Psoas muscle (tissue), 8 donors: ENCODE measurements at regions of chr2 and their contacts with region 1.

Region 1: DNA sequence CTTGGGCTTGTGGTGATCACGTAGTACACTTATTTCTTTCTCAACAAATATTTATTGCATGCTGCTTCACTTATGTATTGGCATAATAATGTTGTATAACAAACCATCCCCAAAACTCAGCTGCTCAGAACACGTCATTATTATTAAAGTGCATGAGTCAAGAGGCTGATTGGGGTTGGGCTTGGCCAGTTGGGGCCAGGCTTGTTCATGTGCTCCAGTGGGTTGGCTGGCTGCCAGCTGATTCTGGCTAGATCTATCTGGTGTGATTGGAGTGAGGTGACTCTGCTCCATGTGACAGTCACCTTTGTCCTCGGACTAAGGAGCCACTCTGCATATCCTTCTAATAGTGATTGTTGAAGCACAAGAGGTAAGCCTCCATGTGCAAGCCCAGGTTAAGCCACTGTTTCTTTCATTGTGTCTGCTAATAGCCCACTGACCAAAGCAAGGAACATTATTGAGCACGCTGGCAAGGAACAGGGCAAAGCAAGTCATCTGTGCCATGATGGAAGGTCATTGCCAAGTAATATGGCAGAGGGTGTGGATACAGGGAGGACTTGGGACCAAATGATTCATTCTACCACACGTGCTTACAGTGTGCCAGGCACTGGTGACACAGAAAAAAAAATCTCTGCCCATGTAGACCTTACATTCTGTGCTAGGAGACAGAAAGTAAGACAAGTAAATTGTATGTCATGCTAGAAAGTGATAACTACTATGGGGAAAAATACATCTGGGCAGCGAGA is 63.3 kb upstream of the TMEM182 start:
- DNase-seq: peak in 1 of 2 donors; percentile 18
- ATAC-seq: peak in 3 of 4 donors; percentile 27 to 37 (median 30)
- H3K4me3 ChIP-seq: no peak overlapping the region
- H3K27ac ChIP-seq: no peak overlapping the region
- H3K4me1 ChIP-seq: no peaks in the 10 kb centered on the region
- H3K27me3 ChIP-seq: no peaks in the 10 kb centered on the region
- CTCF ChIP-seq: no peak

Region 2: DNA sequence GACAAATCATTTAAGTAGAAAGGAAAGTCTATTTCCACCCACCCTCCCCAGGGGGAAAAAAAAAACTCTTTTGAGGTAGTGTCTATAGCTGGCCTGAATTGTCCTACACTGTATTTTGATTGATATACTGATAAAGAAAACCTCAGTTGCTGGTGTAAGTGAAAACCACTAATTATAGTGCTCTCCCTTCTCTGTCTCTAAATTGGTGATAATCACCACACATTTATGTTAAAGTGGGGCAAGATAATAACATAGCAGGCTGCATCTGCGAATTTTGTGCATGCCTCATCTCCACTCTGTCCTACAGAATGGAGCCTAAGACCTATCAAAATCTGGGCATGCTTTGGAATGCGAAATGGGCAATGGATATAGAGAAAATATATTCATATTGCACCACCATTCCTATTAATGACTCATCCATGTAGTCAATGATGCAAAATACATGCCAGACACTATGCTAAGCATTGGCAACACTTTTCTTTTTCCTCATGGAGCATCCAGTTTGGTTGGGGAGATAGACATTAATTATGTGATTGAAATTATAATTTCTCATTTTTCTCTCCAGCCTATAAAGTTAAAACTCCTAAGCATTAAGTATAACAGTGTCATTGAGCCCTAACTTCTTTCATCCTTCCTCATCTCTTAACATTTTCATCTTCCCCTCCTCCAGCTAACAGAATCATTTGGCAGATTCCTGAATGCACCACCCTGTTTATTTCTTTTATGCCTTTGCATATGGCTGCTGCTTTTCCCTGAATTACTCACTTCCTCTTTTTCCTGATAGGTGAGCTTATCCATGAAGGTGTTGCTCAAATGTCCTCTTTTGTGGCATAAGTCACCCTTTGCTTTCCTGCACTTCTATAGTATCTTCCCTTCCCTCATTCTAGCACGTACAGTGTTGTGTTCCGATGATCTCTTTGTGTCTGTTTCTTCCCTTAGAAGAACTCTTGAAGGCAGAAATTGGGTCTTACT is 21.0 kb before region 1 on chr2:
- intact Hi-C with region 1: loop called in 1 of 2 experiments (anchors 2 kb)
- DNase-seq: no peak
- ATAC-seq: no peak
- H3K4me3 ChIP-seq: no peak overlapping the region
- H3K27ac ChIP-seq: no peak overlapping the region
- H3K4me1 ChIP-seq: no peaks in the 10 kb centered on the region
- H3K27me3 ChIP-seq: no peaks in the 10 kb centered on the region
- CTCF ChIP-seq: no peak

Region 3: GRCh38 chr2:102717308-102718018 is 18.9 kb after region 1 on chr2:
- intact Hi-C with region 1: no loop called
- DNase-seq: peak; percentile 42 to 66
- ATAC-seq: peak; percentile 72 to 89 (median 84)
- H3K4me3 ChIP-seq: no peak overlapping the region
- H3K27ac ChIP-seq: peak overlapping the region; percentile 16
- H3K4me1 ChIP-seq: peaks cover 8% of the 10 kb centered on the region
- H3K27me3 ChIP-seq: no peaks in the 10 kb centered on the region
- CTCF ChIP-seq: no peak

Region 4: DNA sequence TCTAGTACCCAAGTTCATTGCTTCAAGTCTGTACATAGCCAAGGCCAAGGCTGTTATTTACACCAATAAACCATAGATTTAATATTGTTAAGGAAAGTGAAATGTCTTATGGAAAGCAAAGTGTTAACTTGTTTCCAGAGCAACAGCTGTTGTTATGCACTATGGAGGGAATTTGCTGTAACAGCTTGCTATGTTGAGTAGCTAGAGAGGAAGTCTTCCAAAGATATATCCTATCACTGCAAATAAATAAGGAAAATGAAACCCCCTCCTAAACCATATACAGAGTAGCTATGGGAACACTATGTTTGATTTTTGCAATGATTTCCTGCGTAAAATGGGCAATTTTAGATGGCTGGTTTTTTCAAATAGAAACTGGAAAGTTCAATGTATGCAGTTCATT is 84.4 kb after region 1 on chr2:
- intact Hi-C with region 1: no loop called
- DNase-seq: no peak
- ATAC-seq: peak in 2 of 4 donors; percentile 51 to 59
- H3K4me3 ChIP-seq: peak overlapping the region; percentile 15
- H3K27ac ChIP-seq: peak overlapping the region; percentile 62
- H3K4me1 ChIP-seq: peaks cover 32% of the 10 kb centered on the region
- H3K27me3 ChIP-seq: no peaks in the 10 kb centered on the region
- CTCF ChIP-seq: no peak